ENCODE measurements at regions of chr10 and their contacts with region 1.

Region 1: GRCh38 chr10:100009793-100010676 is at the start of gene DNMBP:
- DNase-seq: peak; percentile 91
- H3K4me3 ChIP-seq: peak within 1 kb of the TSS; percentile 62 to 83 (median 74)
- H3K27ac ChIP-seq: peak within 1 kb of the TSS; percentile 82 to 91 (median 85)
- H3K4me1 ChIP-seq: peaks cover 0 to 45% (median 37%) of the 10 kb centered on the region in 4 donors
- H3K27me3 ChIP-seq: no peaks in the 10 kb centered on the region
- CTCF ChIP-seq: peak in 2 of 4 experiments; percentile 44 to 55
- EP300 ChIP-seq: no peak
- POLR2A ChIP-seq: no peak
- total RNA-seq, gene DNMBP: 15.0 to 21.6 (median 16.0) TPM

Region 2: GRCh38 chr10:99845837-99846382 is 164.1 kb before region 1 on chr10:
- intact Hi-C with region 1: loop called (anchors 2 kb)
- DNase-seq: peak; percentile 91
- H3K4me3 ChIP-seq: peak overlapping the region in 3 of 4 donors; percentile 26 to 41 (median 32)
- H3K27ac ChIP-seq: peak overlapping the region in 1 of 4 donors; percentile 60
- H3K4me1 ChIP-seq: peaks cover 0 to 16% (median 4%) of the 10 kb centered on the region in 4 donors
- H3K27me3 ChIP-seq: no peaks in the 10 kb centered on the region
- CTCF ChIP-seq: peak; percentile 88 to 96 (median 90)
- EP300 ChIP-seq: no peak
- POLR2A ChIP-seq: no peak

Region 3: GRCh38 chr10:99926925-99927720 is 82.9 kb before region 1 on chr10:
- intact Hi-C with region 1: loop called (anchors 5 kb)
- DNase-seq: peak; percentile 74
- H3K4me3 ChIP-seq: peak overlapping the region in 1 of 4 donors; percentile 0
- H3K27ac ChIP-seq: peak overlapping the region; percentile 17 to 54 (median 48)
- H3K4me1 ChIP-seq: peaks cover 0 to 46% (median 37%) of the 10 kb centered on the region in 4 donors
- H3K27me3 ChIP-seq: no peaks in the 10 kb centered on the region
- CTCF ChIP-seq: no peak
- EP300 ChIP-seq: no peak
- POLR2A ChIP-seq: no peak

Region 4: GRCh38 chr10:99973190-99973589 is 36.8 kb before region 1 on chr10:
- intact Hi-C with region 1: loop called (anchors 1 kb)
- DNase-seq: no peak
- H3K4me3 ChIP-seq: no peak overlapping the region
- H3K27ac ChIP-seq: peak overlapping the region in 1 of 4 donors; percentile 5
- H3K4me1 ChIP-seq: peaks cover 0 to 42% (median 33%) of the 10 kb centered on the region in 4 donors
- H3K27me3 ChIP-seq: no peaks in the 10 kb centered on the region
- CTCF ChIP-seq: peak in 1 of 4 experiments; percentile 20
- EP300 ChIP-seq: no peak
- POLR2A ChIP-seq: no peak

Measured in sigmoid colon (tissue), 7 donors.